K562 (cell line): ENCODE measurements at regions of chr6 and their contacts with region 1.

Region 1: DNA sequence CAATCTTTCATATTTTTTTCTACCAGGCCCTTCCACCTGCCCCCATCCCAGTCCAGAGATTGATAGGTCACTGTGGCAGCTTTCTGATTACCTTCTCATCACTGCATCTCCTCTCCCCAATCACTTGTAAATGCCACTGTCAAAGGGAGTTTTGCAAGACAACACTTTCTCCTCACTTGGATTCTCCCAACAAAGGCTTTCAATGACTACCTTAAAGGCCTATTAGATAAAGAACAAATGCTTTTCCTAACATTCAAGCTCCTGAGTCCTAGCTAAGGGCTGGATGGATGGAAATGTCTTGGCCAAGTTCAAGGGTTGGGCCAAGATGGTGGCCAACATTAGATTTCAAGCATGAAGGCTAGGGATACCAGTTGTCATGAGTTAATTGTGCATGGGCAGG is 55.3 kb downstream of the UNC5CL start:
- DNase-seq: no peak
- ATAC-seq: no peak
- H3K4me3 ChIP-seq: no peak overlapping the region
- H3K27ac ChIP-seq: no peak overlapping the region
- H3K4me1 ChIP-seq: no peaks in the 10 kb centered on the region
- H3K27me3 ChIP-seq: peaks cover 6 to 32% of the 10 kb centered on the region in 2 experiments; a peak in 4 of 5 replicates
- CTCF ChIP-seq: no peak
- EP300 ChIP-seq: no peak
- POLR2A ChIP-seq: no peak
- RAD21 ChIP-seq: no peak

Region 2: DNA sequence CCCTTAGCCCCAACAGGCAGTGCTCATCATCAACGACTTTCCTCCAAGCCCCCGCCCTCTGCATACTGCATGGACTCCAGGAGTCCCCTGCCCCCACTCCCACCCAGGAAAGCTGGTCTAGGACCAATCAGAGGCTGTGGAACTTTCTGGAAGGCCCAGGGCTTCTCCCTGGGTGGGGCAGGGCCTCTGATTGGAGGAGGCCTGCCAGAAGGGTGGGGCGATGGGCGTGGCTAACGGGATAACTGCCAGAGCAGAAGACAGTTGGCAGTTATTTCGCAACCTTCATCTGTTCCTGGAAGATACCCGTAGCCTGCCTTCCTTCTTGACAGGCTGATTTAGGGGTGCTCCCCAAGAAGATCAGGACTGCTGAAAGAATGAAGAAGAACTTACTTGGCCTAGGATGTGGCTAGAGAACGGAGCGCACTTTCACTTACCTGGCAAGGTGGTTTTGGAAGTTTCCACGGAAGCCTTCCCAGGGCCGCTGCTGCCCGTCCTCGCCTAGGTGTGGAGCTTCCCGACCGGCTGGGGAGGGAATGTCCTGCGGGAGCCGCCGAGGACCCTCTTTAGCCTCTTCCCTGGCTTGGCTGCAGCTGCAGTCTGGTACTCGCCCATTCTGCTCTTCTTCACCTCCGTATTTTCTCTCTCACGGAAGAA is 605.6 kb before region 1 on chr6:
- CTCF ChIA-PET with region 1: no interaction called
- POLR2A ChIA-PET with region 1: no interaction called
- in situ Hi-C with region 1: no loop called
- intact Hi-C with region 1: no loop called
- DNase-seq: peak; percentile 66 to 82 (median 80)
- ATAC-seq: peak; percentile 97
- H3K4me3 ChIP-seq: peak overlapping the region; percentile 17
- H3K27ac ChIP-seq: peak overlapping the region; percentile 67; the same call in 2 of the 3 replicates
- H3K4me1 ChIP-seq: peaks cover 7 to 27% of the 10 kb centered on the region in 2 experiments; a peak in 4 of 5 replicates
- H3K27me3 ChIP-seq: no peaks in the 10 kb centered on the region
- CTCF ChIP-seq: no peak
- EP300 ChIP-seq: peak; percentile 97
- POLR2A ChIP-seq: no peak
- RAD21 ChIP-seq: no peak

Region 3: DNA sequence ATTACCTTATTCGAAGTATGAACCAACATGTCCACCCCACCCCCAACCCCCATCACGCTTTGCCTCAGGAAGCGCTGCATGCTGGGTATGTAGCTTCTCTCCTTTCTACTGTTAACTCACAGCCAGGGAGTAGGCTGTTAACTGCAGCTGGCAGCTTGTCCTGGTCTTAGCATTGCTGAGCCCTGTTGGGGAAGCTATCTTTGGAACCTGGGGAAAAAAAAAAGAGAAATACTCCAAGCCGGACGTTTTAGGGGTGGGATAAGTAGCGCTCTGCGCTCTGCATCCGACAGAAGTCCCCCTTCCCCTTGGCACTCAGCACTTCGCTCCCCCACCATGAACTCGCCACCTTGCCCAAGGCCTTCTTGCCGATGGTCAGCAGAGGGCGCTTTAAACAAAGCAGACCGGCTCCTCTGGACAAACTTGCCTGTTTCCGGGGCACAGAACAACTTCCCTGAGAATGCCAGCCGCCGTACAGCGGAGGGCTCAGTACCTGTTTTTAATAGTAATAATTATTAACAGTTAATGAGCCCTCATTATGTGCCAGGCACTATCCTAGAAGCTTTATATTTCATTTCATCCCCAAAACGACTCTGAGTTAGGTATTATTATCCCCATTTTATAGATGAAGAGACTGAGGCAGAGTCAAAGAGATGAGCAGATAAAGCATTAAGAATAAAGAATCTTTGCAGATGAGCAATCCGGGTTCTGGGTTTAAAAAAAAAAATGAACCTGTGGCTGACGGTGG is 619.3 kb after region 1 on chr6:
- CTCF ChIA-PET with region 1: no interaction called
- POLR2A ChIA-PET with region 1: no interaction called
- in situ Hi-C with region 1: no loop called
- intact Hi-C with region 1: no loop called
- DNase-seq: peak; percentile 83 to 87 (median 84)
- ATAC-seq: peak; percentile 85
- H3K4me3 ChIP-seq: no peak overlapping the region
- H3K27ac ChIP-seq: no peak overlapping the region
- H3K4me1 ChIP-seq: peaks cover 0 to 9% of the 10 kb centered on the region in 2 experiments; a peak in 3 of 5 replicates
- H3K27me3 ChIP-seq: peaks cover 15 to 28% of the 10 kb centered on the region in 2 experiments; a peak in 3 of 5 replicates
- CTCF ChIP-seq: peak; percentile 92 to 94 (median 94)
- EP300 ChIP-seq: no peak
- POLR2A ChIP-seq: no peak
- RAD21 ChIP-seq: peak; percentile 83 to 92

Region 4: DNA sequence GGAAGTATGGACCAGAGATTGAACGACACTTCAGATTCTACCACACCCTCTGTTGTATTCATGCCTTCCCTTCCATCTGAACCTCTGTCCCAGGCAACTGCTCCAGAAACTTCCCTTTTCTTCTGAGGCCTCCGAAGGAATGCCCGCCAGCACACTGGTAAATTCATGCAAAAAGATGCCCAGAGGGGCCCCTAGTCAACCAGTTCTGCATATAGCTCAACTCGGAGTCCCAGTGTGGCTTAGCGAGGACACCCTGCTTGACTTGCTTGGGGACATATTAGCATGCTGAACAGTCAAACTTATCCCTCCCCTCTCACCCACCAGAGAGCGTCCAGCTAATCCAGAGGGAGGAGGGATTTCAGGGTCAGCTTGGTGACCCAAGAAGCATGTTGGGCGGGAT is 631.5 kb after region 1 on chr6:
- CTCF ChIA-PET with region 1: no interaction called
- POLR2A ChIA-PET with region 1: no interaction called
- in situ Hi-C with region 1: no loop called
- intact Hi-C with region 1: loop called (anchors 5 kb)
- DNase-seq: no peak
- ATAC-seq: no peak
- H3K4me3 ChIP-seq: no peak overlapping the region
- H3K27ac ChIP-seq: no peak overlapping the region
- H3K4me1 ChIP-seq: no peaks in the 10 kb centered on the region
- H3K27me3 ChIP-seq: peaks cover 33 to 40% of the 10 kb centered on the region in 2 experiments
- CTCF ChIP-seq: no peak
- EP300 ChIP-seq: no peak
- POLR2A ChIP-seq: no peak
- RAD21 ChIP-seq: no peak